ENCODE measurements at regions of chr20 and their contacts with region 1.

Region 1: DNA sequence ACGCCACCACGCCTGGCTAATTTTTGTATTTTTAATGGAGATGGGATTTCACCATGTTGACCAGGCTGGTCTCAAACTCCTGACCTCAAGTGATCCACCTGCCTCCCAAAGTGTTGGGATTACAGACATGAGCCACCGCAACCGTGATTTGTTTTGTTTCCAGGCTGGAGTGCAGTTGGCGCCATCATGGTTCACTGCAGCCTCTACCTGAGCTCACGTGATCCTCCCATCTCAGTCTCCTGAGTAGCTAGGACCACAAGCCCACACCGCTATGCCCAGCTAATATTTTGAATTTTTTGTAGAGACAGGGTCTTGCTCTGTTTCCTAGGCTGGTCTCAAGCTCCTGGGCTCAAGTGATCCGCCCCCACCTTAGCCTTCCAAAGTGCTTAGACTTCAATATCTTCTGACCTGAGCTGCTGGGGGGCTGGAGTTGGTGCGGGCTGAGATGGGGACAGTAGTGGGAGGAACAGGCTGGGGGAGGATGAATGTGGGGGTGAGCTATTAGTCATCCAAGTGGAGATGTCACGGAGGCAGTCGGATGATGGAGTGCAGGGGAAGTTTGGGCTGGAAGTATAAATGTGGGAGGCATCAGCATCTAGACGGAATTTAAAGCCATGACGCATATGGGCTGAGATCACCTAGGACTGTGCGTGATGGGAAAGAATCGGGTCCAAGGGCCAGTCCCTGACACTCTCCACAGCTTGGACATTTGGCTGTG is 23.1 kb upstream of the ZMYND8 start:
- DNase-seq: no peak
- H3K4me3 Mint-ChIP-seq: no peak overlapping the region
- H3K27ac Mint-ChIP-seq: no peak overlapping the region
- H3K4me1 Mint-ChIP-seq: peaks cover 28% of the 10 kb centered on the region
- H3K27me3 Mint-ChIP-seq: peaks cover 26% of the 10 kb centered on the region

Region 2: DNA sequence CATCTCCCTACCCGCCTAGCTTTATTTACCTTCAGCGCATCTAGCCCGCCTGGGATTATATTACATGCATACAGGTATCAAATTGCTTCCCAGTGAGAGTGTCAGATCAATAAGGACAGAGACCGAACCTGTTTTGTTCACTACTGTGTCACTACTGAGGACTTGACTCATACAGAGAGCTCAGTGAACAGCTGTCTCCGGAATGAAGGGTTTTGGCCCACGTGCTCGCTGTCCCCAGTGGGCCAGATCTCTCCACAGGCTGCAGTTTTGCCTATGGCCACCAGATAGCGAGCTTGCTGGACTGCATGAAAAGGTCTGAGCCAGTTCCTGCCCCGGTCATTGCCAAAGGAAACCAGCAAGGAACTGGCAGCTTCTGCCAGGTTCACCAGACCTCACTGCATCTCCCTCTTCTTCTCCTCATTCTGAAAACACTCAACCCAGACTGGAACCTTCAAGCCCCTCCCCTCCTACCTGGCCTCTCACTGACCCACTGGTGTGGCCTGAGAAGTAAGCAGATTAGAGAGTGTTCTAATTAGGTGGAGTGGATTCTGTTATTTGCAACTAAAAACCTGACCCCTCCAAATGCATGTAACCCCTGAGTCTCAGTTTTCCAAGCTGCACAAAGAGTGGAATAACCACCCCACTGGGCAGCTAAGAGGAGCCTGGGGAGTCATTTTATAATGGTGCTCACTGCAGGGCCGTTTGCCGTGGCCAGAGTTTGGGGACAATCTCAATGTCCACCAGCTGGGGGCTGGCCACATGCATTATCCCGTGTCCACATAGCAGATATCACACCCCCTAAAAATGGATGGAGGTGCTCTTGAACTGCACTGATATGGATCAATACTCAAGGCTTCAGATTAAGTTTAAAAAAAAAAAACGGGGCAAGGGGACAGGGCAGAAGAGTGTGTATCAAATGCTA is 173.8 kb before region 1 on chr20:
- CTCF ChIA-PET with region 1: interaction called, 11 read pairs
- DNase-seq: no peak
- H3K4me3 Mint-ChIP-seq: no peak overlapping the region
- H3K27ac Mint-ChIP-seq: peak overlapping the region; percentile 37
- H3K4me1 Mint-ChIP-seq: no peaks in the 10 kb centered on the region
- H3K27me3 Mint-ChIP-seq: no peaks in the 10 kb centered on the region

Region 3: GRCh38 chr20:47262365-47263013 is 117.1 kb before region 1 on chr20:
- CTCF ChIA-PET with region 1: interaction called, 16 read pairs
- DNase-seq: no peak
- H3K4me3 Mint-ChIP-seq: no peak overlapping the region
- H3K27ac Mint-ChIP-seq: peak overlapping the region; percentile 63
- H3K4me1 Mint-ChIP-seq: peaks cover 9% of the 10 kb centered on the region
- H3K27me3 Mint-ChIP-seq: no peaks in the 10 kb centered on the region

Region 4: GRCh38 chr20:47296950-47297349 is 82.6 kb before region 1 on chr20:
- CTCF ChIA-PET with region 1: interaction called, 15 read pairs
- DNase-seq: no peak
- H3K4me3 Mint-ChIP-seq: no peak overlapping the region
- H3K27ac Mint-ChIP-seq: no peak overlapping the region
- H3K4me1 Mint-ChIP-seq: peaks cover 8% of the 10 kb centered on the region
- H3K27me3 Mint-ChIP-seq: no peaks in the 10 kb centered on the region

Region 5: DNA sequence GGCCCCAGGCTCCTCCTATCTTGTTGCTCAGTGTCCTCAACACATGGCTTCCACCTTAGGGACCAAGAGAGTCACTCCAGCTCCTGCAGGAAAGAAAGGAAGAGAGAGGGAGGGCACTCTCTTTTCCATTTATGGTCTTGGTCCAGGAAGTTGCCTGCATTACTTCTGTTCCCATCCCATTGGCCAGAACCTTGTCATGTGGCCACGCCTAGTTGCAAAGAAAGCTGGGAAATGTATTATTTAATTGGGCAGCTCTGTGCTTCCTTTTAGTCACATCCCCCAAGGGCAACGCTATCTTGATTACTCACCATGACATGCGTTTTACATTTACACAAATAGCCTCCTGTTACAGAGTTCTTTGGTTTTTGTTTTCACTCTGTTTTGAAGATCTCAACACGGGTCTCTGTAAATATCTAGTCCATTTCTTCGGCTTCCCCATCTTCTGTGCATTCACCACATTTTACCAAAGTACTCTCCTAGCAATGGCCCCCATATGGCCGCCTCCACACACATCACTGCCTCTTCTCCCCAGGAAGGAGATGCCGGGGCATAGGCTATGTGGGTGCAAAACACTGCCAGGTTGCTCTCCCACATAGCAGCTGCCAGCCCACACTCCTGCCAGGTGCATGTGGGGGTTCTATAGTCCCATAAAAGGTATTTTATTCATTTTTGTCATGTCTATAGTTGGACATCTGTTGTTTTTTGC is 12.6 kb after region 1 on chr20:
- CTCF ChIA-PET with region 1: interaction called, 12 read pairs
- DNase-seq: no peak
- H3K4me3 Mint-ChIP-seq: no peak overlapping the region
- H3K27ac Mint-ChIP-seq: peak overlapping the region; percentile 58
- H3K4me1 Mint-ChIP-seq: peaks cover 15% of the 10 kb centered on the region
- H3K27me3 Mint-ChIP-seq: no peaks in the 10 kb centered on the region

Region 6: GRCh38 chr20:47461120-47461685 is 81.6 kb after region 1 on chr20:
- CTCF ChIA-PET with region 1: no interaction called
- DNase-seq: no peak
- H3K4me3 Mint-ChIP-seq: no peak overlapping the region
- H3K27ac Mint-ChIP-seq: no peak overlapping the region
- H3K4me1 Mint-ChIP-seq: peaks cover 16% of the 10 kb centered on the region
- H3K27me3 Mint-ChIP-seq: peaks cover 7% of the 10 kb centered on the region

Region 7: GRCh38 chr20:47620808-47621805 is 241.5 kb after region 1 on chr20:
- CTCF ChIA-PET with region 1: interaction called, 68 read pairs
- DNase-seq: peak; percentile 29
- H3K4me3 Mint-ChIP-seq: no peak overlapping the region
- H3K27ac Mint-ChIP-seq: no peak overlapping the region
- H3K4me1 Mint-ChIP-seq: peaks cover 35% of the 10 kb centered on the region
- H3K27me3 Mint-ChIP-seq: no peaks in the 10 kb centered on the region